ENCODE measurements at regions of chr12 and their contacts with region 1.

Region 1: GRCh38 chr12:53213348-53213747 is 6.3 kb upstream of the ITGB7 start:
- DNase-seq: peak; percentile 84
- H3K4me3 Mint-ChIP-seq: no peak overlapping the region
- H3K27ac Mint-ChIP-seq: no peak overlapping the region
- H3K4me1 Mint-ChIP-seq: peaks cover 13% of the 10 kb centered on the region
- H3K27me3 Mint-ChIP-seq: no peaks in the 10 kb centered on the region
- CTCF ChIP-seq: peak; percentile 92

Region 2: DNA sequence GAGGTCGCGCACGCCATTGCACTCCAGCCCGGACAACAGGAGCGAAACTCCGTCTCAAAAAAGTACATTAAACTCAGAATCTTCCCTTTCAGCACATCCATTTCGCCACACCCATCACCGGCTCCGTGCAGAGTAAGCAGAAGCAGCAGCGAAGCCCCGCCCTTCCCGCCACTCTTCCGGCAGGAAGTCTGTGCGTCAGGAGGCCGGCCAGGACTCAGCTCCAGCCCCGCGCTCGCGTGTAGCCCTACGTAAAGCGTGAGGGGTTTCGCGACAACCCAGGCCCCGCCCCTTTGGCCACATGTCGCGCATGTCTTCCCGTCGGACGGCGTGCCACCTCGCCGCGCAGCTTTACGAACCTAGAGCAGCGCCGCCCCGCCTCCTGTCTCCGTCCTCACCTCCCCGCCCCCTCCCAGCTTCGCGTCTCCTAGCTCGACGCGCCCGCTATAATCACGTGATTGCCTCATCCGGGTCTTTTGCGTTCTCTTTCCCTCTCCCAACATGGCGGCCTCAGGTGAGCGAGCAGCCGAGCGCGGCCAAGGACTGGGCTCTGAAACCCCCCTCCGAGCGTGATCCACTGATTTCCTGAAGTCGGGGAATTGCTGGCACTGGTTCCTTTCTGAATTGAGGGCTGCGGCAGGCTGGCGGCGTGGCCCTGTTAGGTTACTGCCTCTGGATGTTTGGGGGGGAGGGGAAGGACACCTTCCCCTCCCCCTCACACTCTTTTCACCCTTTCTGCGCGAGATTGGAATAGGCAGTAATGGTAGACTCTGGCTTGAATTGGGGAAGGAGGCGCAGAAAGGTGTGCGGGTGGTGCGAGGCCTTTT is 207.2 kb before region 1 on chr12 and contains the start of gene EIF4B:
- CTCF ChIA-PET with region 1: no interaction called
- intact Hi-C with region 1: no loop called
- DNase-seq: peak; percentile 98
- H3K4me3 Mint-ChIP-seq: peak within 1 kb of the TSS; percentile 95
- H3K27ac Mint-ChIP-seq: peak within 1 kb of the TSS; percentile 94
- H3K4me1 Mint-ChIP-seq: peaks cover 23% of the 10 kb centered on the region
- H3K27me3 Mint-ChIP-seq: no peaks in the 10 kb centered on the region
- CTCF ChIP-seq: no peak
- total RNA-seq, gene EIF4B: 242 and 272 TPM in 2 replicates

Region 3: DNA sequence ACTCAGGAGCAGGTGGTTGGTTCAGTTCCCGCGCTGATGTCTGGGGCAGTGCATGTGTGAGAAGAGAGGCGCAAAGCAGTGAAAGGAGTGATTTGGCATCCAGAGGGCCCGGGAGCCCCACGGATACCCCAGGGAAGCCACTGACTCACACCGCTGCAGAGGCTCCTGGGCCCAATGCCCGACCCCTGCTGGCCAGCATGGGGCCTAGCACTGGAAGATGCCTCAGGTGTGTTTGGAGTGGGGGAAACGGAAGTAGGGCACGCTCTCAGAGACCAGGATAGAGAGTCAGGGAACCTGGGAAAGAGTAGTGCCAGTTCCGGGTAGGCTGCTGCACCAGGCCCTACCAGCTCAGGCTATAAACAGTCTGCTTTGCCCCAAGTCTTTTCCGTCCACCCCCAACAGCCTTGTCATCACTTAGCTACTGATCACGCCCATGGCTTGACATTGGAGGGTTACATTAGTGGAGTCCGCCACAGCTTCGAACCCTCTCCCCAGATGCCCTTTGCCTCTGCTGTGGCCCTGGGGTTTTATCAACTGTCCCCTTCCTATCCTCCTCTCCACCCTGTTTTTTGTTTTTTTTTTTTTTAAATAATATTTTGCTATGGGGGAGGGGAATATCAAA is 23.1 kb before region 1 on chr12:
- CTCF ChIA-PET with region 1: no interaction called
- intact Hi-C with region 1: no loop called
- DNase-seq: peak; percentile 43
- H3K4me3 Mint-ChIP-seq: no peak overlapping the region
- H3K27ac Mint-ChIP-seq: no peak overlapping the region
- H3K4me1 Mint-ChIP-seq: no peaks in the 10 kb centered on the region
- H3K27me3 Mint-ChIP-seq: no peaks in the 10 kb centered on the region
- CTCF ChIP-seq: peak; percentile 70

Region 4: GRCh38 chr12:53251477-53252348 is 38.4 kb after region 1 on chr12:
- CTCF ChIA-PET with region 1: interaction called, 21 read pairs
- intact Hi-C with region 1: loop called (anchors 5 kb)
- DNase-seq: peak; percentile 67
- H3K4me3 Mint-ChIP-seq: peak overlapping the region; percentile 85
- H3K27ac Mint-ChIP-seq: peak overlapping the region; percentile 85
- H3K4me1 Mint-ChIP-seq: peaks cover 27% of the 10 kb centered on the region
- H3K27me3 Mint-ChIP-seq: no peaks in the 10 kb centered on the region
- CTCF ChIP-seq: peak; percentile 39

Region 5: DNA sequence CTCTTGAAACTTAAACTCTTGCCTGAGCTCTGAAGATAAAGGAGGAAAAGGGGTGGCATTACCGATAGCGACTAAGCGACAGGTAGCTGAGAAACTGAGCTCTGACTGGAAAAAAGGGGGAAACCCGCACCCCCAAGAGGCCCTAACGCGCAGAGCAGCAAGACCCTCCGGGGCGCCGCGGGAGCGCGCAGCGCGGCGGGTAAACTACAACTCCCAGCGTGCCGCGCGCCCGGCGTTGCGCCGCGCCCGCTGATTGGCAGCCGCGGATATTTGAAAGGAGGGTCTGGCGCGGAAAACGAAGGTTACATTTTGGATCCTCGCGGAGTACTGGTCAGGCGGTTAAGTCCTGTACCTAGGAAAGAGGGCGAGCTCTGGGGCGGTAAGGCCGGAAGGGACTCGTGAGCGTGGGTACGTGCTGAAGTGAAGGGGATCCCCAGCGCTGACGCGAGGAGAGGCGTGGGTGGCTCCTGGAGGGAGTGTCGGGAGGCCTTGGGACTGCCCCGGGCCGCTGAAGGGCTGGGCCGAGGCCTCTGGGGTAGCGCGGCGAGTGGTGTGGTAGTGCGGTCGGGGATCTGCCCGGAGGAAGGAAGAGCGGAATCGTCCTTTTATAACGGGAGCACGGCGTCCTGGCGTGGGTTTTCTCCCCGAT is 54.8 kb after region 1 on chr12 and contains the start of gene ESPL1:
- CTCF ChIA-PET with region 1: interaction called, 8 read pairs
- intact Hi-C with region 1: loop called (anchors 5 kb)
- DNase-seq: peak; percentile 73
- H3K4me3 Mint-ChIP-seq: peak within 1 kb of the TSS; percentile 87
- H3K27ac Mint-ChIP-seq: peak within 1 kb of the TSS; percentile 64
- H3K4me1 Mint-ChIP-seq: peaks cover 15% of the 10 kb centered on the region
- H3K27me3 Mint-ChIP-seq: no peaks in the 10 kb centered on the region
- CTCF ChIP-seq: no peak
- total RNA-seq, gene ESPL1: 24.3 and 31.1 TPM in 2 replicates

Region 6: GRCh38 chr12:53287741-53288216 is 74.4 kb after region 1 on chr12:
- CTCF ChIA-PET with region 1: interaction called, 3 read pairs
- intact Hi-C with region 1: loop called (anchors 1 kb)
- DNase-seq: peak; percentile 36
- H3K4me3 Mint-ChIP-seq: no peak overlapping the region
- H3K27ac Mint-ChIP-seq: no peak overlapping the region
- H3K4me1 Mint-ChIP-seq: no peaks in the 10 kb centered on the region
- H3K27me3 Mint-ChIP-seq: no peaks in the 10 kb centered on the region
- CTCF ChIP-seq: peak; percentile 52